Heart right ventricle (tissue), 16 donors: ENCODE measurements at regions of chr6 and their contacts with region 1.

Region 1: GRCh38 chr6:52399511-52400312 is 20.4 kb upstream of the EFHC1 start:
- DNase-seq: peak in 1 of 2 donors; percentile 30
- ATAC-seq: peak in 4 of 8 donors; percentile 49 to 66 (median 59)
- H3K4me3 ChIP-seq: no peak overlapping the region
- H3K27ac ChIP-seq: no peak overlapping the region
- H3K4me1 ChIP-seq: peaks cover 0 to 9% (median 0%) of the 10 kb centered on the region in 9 donors
- H3K27me3 ChIP-seq: no peaks in the 10 kb centered on the region
- CTCF ChIP-seq: peak; percentile 51 to 84 (median 79)

Region 2: DNA sequence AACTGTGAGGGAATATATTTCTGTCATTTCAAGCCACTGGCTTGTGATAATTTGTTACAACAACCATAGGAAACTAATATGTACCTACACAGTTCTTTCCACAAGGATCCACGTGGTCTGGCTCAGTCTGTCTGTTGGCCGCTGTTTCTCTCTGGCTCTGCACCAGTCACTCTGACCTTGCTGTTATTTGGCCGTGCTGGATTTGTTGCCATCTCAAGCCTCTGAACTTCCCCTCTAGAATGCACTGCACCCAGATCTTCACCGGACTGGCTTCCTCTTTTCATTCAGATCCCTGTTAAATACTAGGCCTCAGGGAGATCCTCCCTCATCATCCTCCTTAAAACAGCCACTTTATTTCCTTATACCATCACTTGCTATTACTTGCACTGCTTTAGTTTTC is 1134.3 kb before region 1 on chr6:
- intact Hi-C with region 1: no loop called
- DNase-seq: peak in 1 of 2 donors; percentile 4
- ATAC-seq: peak in 3 of 8 donors; percentile 21 to 73 (median 53)
- H3K4me3 ChIP-seq: no peak overlapping the region
- H3K27ac ChIP-seq: peak overlapping the region in 1 of 10 donors; percentile 66
- H3K4me1 ChIP-seq: peaks cover 0 to 8% (median 0%) of the 10 kb centered on the region in 9 donors
- H3K27me3 ChIP-seq: no peaks in the 10 kb centered on the region
- CTCF ChIP-seq: no peak

Region 3: DNA sequence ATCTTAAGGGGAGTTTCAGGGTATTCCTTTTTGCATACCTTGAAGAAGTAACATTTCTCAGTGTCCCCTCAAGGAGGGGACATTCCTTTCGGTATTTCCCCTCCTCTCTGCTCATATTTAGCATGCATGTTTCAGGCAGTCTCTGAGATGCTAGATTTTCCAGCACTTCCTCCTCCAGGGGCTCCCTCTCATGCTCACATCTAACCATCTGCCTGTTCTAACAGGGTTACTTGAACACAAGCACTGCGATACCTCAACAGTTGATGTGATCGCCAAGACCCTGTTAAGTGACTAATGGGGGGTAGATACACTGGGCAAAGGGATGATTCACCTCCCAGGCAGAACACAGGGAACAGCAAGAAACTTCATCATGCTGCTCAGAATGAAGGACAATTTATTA is 102.3 kb before region 1 on chr6:
- intact Hi-C with region 1: loop called in 1 of 10 experiments (anchors 10 kb)
- DNase-seq: no peak
- ATAC-seq: no peak
- H3K4me3 ChIP-seq: no peak overlapping the region
- H3K27ac ChIP-seq: no peak overlapping the region
- H3K4me1 ChIP-seq: peaks cover 0 to 6% (median 0%) of the 10 kb centered on the region in 9 donors
- H3K27me3 ChIP-seq: no peaks in the 10 kb centered on the region
- CTCF ChIP-seq: no peak

Region 4: GRCh38 chr6:52361945-52362442 is 37.7 kb before region 1 on chr6 and contains the start of gene PAQR8:
- intact Hi-C with region 1: loop called in 1 of 10 experiments (anchors 5 kb)
- DNase-seq: peak; percentile 71 to 87
- ATAC-seq: peak; percentile 95 to 99 (median 96)
- H3K4me3 ChIP-seq: peak within 1 kb of the TSS; percentile 73 to 93 (median 89)
- H3K27ac ChIP-seq: peak within 1 kb of the TSS; percentile 66 to 93 (median 80)
- H3K4me1 ChIP-seq: peaks cover 0 to 36% (median 17%) of the 10 kb centered on the region in 9 donors
- H3K27me3 ChIP-seq: no peaks in the 10 kb centered on the region
- CTCF ChIP-seq: no peak
- total RNA-seq, gene PAQR8: 1.5 to 6.3 (median 3.0) TPM